ENCODE measurements at regions of chr9 and their contacts with region 1.

Region 1: DNA sequence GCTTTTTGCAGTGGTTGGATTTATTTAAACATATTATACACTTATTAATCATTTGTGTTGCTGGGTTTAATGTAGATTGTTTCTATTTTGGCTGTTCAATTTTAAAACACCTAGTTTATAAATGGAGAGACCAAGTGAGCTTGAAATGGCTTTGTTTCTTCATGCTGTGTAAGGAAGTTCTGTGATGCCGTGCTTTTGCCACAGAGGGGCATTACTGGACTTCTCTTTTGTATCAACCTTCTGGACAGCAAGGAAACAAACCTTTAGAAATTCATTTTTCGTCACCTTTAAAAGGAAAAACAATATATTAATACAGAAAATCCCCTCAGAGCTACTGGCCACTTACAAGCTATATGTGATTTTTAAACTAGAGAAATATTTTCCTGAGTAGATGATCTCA is 81.9 kb downstream of the DMRTA1 start:
- DNase-seq: no peak
- ATAC-seq: no peak
- H3K4me3 Mint-ChIP-seq: no peak overlapping the region
- H3K27ac Mint-ChIP-seq: no peak overlapping the region
- H3K4me1 Mint-ChIP-seq: no peaks in the 10 kb centered on the region
- H3K27me3 Mint-ChIP-seq: no peaks in the 10 kb centered on the region

Region 2: DNA sequence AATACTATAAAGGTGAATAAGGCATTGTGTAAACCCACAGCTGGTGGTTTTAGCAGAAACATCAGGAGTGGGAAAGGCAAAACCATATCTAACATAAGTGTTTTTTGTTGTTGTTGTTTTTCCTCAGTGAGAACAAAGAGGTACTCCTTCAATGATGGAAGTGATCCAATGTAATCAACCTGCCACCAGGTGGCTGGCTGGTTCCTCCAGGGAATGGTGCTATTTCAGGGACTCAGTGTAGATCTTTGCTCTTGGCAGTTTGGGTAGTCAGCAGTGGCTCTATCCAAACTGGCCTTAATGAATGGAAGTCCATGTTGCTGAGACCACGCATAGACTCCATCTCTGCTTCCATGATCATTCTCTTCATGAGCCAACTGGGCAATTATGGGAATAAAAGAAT is 71.0 kb before region 1 on chr9:
- CTCF ChIA-PET with region 1: no interaction called
- POLR2A ChIA-PET with region 1: no interaction called
- intact Hi-C with region 1: no loop called
- DNase-seq: no peak
- ATAC-seq: no peak
- H3K4me3 Mint-ChIP-seq: no peak overlapping the region
- H3K27ac Mint-ChIP-seq: no peak overlapping the region
- H3K4me1 Mint-ChIP-seq: no peaks in the 10 kb centered on the region
- H3K27me3 Mint-ChIP-seq: peaks cover 17% of the 10 kb centered on the region

Region 3: GRCh38 chr9:22514866-22515265 is 13.6 kb before region 1 on chr9:
- CTCF ChIA-PET with region 1: no interaction called
- POLR2A ChIA-PET with region 1: interaction called, 4 read pairs
- intact Hi-C with region 1: loop called in 1 of 2 experiments (anchors 1 kb)
- DNase-seq: no peak
- ATAC-seq: no peak
- H3K4me3 Mint-ChIP-seq: no peak overlapping the region
- H3K27ac Mint-ChIP-seq: no peak overlapping the region
- H3K4me1 Mint-ChIP-seq: no peaks in the 10 kb centered on the region
- H3K27me3 Mint-ChIP-seq: peaks cover 2% of the 10 kb centered on the region

Measured in activated CD4-positive, alpha-beta T cell treated with anti-CD3 and anti-CD28 coated beads for 36 hours (primary cell).